Body of pancreas (tissue), 4 donors: ENCODE measurements at regions of chr19 and their contacts with region 1.

Region 1: DNA sequence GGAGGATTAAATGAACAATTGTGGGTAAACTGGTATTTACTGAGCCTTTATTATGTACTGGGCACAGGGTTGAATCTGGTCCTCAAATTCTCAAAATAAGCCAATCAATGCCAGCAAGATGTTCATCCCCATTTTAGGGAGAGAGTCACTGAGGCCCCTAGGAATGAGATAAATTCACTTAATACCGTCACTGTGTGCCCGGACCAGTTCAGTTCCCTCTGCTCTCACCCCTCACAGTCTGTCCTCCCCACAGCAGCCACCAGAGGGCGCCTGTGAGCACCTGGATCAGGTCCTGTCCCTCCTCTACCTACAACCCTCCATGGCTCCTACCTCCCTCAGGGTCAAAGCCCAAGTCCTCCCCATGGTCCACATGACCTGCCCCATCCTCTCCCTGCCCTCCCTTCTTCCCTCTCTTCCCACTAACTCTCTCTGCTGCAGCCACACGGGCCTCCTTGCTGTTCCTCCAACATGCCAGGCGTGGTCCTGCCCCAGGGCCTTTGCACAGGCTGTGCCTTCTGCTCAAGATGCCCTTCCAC is 42.0 kb upstream of the NFIC start:
- DNase-seq: peak; percentile 57 to 74 (median 68)
- ATAC-seq: peak; percentile 38
- H3K4me3 ChIP-seq: no peak overlapping the region
- H3K27ac ChIP-seq: no peak overlapping the region
- H3K4me1 ChIP-seq: no peaks in the 10 kb centered on the region
- H3K27me3 ChIP-seq: peaks cover 0 to 10% of the 10 kb centered on the region in 2 donors
- CTCF ChIP-seq: peak; percentile 40 to 78 (median 61)
- POLR2A ChIP-seq: no peak

Region 2: GRCh38 chr19:3284759-3285646 is 39.4 kb before region 1 on chr19:
- intact Hi-C with region 1: no loop called
- DNase-seq: peak; percentile 97 to 100 (median 98)
- ATAC-seq: peak; percentile 85
- H3K4me3 ChIP-seq: no peak overlapping the region
- H3K27ac ChIP-seq: peak overlapping the region; percentile 54 to 88 (median 75)
- H3K4me1 ChIP-seq: peaks cover 13% of the 10 kb centered on the region
- H3K27me3 ChIP-seq: no peaks in the 10 kb centered on the region
- CTCF ChIP-seq: no peak
- POLR2A ChIP-seq: peak; percentile 16 to 72 (median 71)

Region 3: DNA sequence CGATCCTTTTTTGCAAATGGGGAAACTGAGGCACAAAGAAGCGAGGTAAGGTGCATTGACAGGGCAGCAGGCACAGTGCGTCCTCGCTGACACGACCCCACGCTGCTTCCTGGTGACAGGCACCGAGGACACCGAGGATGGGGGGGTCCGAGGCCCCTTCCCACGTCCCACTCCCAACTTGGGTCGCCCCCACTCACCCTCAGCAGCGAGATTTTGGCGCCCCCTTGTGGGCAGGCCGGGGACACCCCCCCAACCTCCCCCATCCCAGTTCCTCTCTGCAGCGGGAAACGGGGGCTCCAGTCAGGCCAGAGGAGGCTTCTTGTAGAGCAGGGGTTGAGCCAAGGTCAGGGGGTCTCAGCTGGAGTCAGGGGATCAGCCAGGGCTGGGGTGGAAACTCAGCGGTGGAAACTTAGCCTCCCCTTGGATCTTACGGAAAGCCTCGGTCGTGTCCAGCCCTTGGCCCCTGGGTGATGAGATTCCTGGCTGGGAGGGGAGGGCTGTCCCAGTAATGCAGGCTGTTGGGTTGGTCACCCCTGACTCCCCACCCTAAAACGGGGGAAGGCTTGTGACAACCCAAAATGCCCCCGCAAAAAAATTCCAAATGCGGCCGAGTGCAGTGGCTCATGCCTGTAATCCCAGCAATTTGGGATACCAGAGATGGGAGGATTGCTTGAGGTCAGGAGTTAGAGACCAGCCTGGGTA is 147.7 kb after region 1 on chr19:
- intact Hi-C with region 1: loop called (anchors 5 kb)
- DNase-seq: peak in 2 of 4 donors; percentile 35 to 53
- ATAC-seq: peak; percentile 37
- H3K4me3 ChIP-seq: no peak overlapping the region
- H3K27ac ChIP-seq: no peak overlapping the region
- H3K4me1 ChIP-seq: peaks cover 24% of the 10 kb centered on the region
- H3K27me3 ChIP-seq: no peaks in the 10 kb centered on the region
- CTCF ChIP-seq: peak; percentile 52 to 84 (median 73)
- POLR2A ChIP-seq: no peak